ENCODE measurements at regions of chr15 and their contacts with region 1.

Region 1: DNA sequence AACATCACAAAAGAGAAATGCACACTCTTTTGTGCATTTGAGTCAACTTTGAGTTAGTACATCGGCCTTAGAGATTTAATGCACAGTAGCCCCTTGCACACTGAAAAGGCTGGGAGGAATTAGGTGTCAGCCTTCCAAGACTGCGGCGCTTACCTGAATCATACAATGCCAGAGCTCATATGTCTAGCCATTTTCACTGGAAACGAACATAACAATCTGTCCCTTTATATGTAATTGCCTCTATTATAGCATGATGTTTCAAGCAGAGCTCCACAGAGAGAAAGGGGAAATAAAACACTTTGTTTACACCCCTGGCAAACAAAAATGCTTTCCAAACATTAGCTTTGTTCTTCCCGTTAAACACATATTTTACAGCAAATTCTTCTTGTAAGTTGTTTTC is 315.7 kb upstream of the SLCO3A1 start:
- DNase-seq: no peak
- H3K4me3 Mint-ChIP-seq: no peak overlapping the region
- H3K27ac Mint-ChIP-seq: no peak overlapping the region
- H3K4me1 Mint-ChIP-seq: no peaks in the 10 kb centered on the region
- H3K27me3 Mint-ChIP-seq: peaks cover 9% of the 10 kb centered on the region

Region 2: DNA sequence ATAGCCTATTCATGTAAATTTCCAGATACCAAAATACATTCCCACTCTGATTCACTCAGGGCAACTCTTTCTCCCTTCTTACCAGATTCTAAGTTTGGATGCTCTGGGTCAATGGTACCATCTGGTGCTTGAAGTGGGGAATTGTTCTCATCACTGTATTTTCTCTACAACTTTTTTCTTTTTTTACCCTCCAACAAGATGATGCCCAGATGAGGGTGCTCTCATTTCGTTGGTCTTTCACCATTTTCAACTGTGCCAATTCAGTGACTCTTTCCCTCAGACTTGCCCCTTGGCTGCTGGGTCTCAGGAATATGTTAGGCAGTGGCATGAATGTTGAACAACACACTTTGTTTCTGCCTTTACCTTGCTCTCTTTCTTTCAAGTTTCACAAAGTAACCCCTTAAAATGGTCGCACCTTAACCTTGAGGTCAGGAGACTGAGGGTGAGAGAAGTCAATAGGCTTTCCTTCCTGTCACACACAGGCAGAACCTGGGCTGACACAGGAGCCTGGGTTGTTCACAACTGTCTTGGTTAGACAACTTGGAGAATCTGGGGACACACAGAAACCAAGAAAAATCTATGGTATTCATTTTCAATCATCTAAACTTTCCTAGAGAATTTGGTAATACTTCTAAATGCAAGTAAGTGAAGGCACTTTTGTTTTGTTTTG is 15.1 kb before region 1 on chr15:
- intact Hi-C with region 1: loop called (anchors 1 kb)
- DNase-seq: no peak
- H3K4me3 Mint-ChIP-seq: no peak overlapping the region
- H3K27ac Mint-ChIP-seq: no peak overlapping the region
- H3K4me1 Mint-ChIP-seq: no peaks in the 10 kb centered on the region
- H3K27me3 Mint-ChIP-seq: peaks cover 11% of the 10 kb centered on the region

Region 3: DNA sequence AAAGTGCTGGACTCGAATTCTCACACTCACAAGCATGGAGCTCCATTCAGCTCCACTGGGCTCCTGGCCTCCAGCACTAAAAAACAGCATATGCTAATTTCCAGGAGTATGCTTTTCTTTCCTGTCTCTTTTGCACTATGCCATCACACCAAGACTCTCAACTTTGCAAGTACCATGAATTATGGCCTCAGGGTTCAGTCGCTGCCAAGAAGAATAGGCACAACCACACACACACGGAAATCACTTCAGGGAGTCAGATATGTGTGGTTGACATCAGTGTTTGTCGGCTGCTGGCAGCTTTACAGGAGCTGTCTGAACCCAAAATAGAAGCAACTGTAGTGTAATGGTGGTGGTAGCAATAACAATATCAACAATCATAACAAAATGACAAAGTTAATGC is 10.7 kb after region 1 on chr15:
- intact Hi-C with region 1: no loop called
- DNase-seq: no peak
- H3K4me3 Mint-ChIP-seq: no peak overlapping the region
- H3K27ac Mint-ChIP-seq: no peak overlapping the region
- H3K4me1 Mint-ChIP-seq: no peaks in the 10 kb centered on the region
- H3K27me3 Mint-ChIP-seq: no peaks in the 10 kb centered on the region

Measured in activated T-helper 2 cell treated with anti-CD3 and anti-CD28 coated beads, Interferon-gamma antibody, Interleukin-2, Interleukin-4, amounts not matched to agents 10 μg/mL and 5 μg/mL and 100 μg/mL, durations not matched to agents 14 hours and 24 hours and 36 hours (primary cell).